ENCODE measurements at regions of chr3 and their contacts with region 1.

Region 1: DNA sequence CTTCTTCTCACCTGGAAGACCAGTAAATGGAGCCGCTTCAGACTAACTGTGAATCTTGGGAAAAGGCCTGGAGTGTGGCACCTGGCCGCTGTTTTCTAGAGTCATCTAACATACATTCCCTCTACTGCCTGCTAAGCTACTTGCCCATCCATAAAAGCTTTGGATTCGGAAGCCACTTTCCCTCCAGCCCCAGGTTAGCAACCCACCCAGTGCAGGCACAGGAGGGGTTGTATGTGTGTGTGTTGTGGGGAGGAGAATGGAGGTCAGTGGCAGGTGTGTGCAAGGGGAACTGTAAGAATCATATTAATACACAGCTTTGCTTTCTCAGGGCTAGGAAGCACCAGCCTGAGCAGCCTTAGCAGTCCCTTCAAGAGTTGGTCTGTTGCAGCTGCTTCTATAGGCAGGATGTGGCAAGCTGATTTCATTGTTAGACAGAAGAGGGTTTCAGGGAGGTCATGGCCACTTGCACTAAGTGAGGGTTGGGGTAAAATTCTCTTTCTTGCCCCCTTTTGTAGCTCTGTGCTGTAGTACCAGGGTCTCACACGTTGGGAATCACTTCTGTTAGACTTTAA is 8.9 kb downstream of the NSUN3 start:
- DNase-seq: peak in 1 of 4 donors; percentile 20
- ATAC-seq: no peak
- H3K4me3 ChIP-seq: no peak overlapping the region
- H3K27ac ChIP-seq: no peak overlapping the region
- H3K4me1 ChIP-seq: peaks cover 3% of the 10 kb centered on the region
- H3K27me3 ChIP-seq: no peaks in the 10 kb centered on the region
- CTCF ChIP-seq: no peak
- POLR2A ChIP-seq: no peak

Region 2: GRCh38 chr3:94004301-94004910 is 67.4 kb before region 1 on chr3:
- intact Hi-C with region 1: loop called (anchors 5 kb)
- DNase-seq: peak in 1 of 4 donors; percentile 14
- ATAC-seq: peak; percentile 77
- H3K4me3 ChIP-seq: no peak overlapping the region
- H3K27ac ChIP-seq: no peak overlapping the region
- H3K4me1 ChIP-seq: peaks cover 23% of the 10 kb centered on the region
- H3K27me3 ChIP-seq: no peaks in the 10 kb centered on the region
- CTCF ChIP-seq: peak; percentile 65 to 89 (median 84)
- POLR2A ChIP-seq: no peak